Common myeloid progenitor, CD34-positive (primary cell): ENCODE measurements at regions of chr6 and their contacts with region 1.

Region 1: DNA sequence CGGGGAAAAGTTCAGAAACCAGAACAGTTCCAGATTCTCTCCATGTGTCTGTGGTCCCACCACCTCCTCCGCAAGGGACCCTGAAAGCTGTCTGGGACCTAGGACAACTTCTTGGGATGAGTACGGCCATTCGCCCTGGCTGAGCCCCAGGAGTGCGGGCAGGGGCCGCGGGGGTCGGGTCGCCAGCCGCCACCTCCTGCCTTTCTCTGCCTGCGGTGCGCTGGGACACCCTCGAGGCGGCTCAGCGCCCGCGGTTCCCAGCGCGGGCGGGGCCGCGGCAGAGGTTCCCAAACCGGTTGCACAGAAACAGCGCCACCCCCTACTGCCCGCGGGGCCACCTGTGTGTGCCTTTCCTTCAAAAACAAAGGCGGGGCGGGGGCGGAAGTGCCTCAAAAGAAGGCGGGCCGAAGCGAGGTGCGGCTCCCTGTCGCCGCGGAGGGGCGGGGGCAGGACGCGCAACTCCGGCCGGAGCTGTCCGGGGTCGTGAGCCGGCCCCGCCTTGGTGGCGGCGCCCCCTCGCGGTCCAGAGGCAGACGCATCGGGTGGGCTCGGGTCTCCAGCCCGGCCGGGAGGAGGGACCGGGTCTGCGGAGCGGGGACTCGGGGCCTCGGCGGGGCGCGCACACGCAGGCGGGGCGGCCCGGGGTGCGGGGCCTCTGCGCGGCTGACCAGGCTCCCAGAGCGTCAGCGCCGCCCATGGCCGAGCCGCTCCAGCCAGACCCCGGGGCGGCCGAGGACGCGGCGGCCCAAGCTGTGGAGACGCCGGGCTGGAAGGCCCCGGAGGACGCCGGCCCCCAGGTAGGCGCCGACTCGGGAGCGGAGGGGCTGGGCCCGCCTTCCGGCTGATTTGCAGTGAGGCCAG is at the start of gene HEBP2:
- DNase-seq: peak; percentile 95 to 98 (median 97)
- H3K4me3 ChIP-seq: peak within 1 kb of the TSS; percentile 66 to 90 (median 81)
- H3K27ac ChIP-seq: peak within 1 kb of the TSS; percentile 70 to 89
- H3K4me1 ChIP-seq: peaks cover 4 to 31% (median 20%) of the 10 kb centered on the region in 4 experiments
- H3K27me3 ChIP-seq: no peaks in the 10 kb centered on the region

Region 2: DNA sequence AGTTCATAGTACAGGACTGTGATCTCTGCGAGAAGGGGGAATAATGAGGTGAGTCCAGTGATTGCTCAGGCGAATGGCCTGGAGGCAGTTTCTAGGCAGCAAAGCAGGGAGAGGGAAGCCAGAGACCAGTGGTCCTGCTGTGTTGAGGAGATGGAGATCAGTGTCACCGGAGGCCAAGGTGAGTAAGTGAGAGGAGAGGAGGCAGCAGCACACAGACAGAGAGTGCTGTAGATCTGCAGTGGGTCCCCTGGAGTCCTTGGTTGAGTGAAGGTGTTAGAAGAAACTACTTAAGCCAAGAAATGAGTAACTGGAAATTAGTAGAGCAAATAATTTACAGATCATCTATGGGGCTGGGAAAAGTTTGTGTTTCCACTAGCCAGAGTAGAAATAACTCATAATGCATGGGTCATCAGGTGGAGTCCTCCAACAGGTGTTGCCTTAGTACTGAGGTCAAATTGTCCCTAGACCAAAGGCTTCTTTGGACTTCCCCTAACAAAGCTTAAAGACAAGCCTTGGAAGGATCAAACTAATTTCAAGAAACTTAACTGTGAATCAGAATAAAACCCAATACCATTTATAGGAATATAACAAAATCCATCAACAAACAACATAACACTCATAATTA is 13.6 kb after region 1 on chr6:
- CTCF ChIA-PET with region 1: interaction called, 26 read pairs
- POLR2A ChIA-PET with region 1: no interaction called
- DNase-seq: no peak
- H3K4me3 ChIP-seq: no peak overlapping the region
- H3K27ac ChIP-seq: no peak overlapping the region
- H3K4me1 ChIP-seq: peaks cover 0 to 2% (median under 1%) of the 10 kb centered on the region in 4 experiments
- H3K27me3 ChIP-seq: no peaks in the 10 kb centered on the region